ENCODE measurements at regions of chr4 and their contacts with region 1.

Region 1: DNA sequence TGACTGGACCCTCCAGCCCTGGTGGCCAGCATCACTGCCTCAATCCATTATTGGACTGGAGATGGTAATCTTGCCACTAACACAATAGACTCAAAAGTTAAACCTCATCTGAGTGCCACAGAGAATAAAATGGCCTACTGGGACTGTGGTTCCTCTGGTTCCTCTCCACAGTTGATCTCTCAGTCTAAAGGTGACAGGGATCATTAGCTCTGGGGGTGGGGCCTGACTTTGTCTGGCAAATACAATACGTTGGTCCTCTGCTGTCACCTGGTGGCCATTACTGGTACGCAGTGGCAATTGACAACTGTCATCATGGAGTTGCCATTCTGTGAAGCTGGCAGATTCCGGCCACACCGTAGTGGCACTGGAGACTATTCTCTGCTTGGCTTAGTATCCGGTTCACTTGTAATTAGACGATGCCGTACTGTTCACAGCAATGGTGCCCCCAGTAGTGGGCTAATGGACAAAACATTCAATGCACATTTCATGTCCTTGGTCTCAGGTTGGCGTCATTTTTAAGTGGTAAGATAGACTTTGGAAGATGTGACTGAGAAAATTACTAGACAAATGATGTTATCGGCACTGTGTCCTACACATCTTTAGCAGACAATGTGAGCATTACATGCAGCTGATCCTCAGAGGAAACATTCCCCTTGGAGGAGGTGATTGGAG is 6.7 kb downstream of the FGFBP2 start:
- DNase-seq: peak; percentile 73
- H3K4me3 ChIP-seq: no peak overlapping the region
- H3K27ac ChIP-seq: no peak overlapping the region
- H3K4me1 ChIP-seq: no peaks in the 10 kb centered on the region
- H3K27me3 ChIP-seq: no peaks in the 10 kb centered on the region
- CTCF ChIP-seq: peak; percentile 53 to 88 (median 79)
- EP300 ChIP-seq: no peak
- POLR2A ChIP-seq: no peak

Region 2: GRCh38 chr4:15479089-15479912 is 477.0 kb before region 1 on chr4:
- intact Hi-C with region 1: loop called (anchors 5 kb)
- DNase-seq: peak; percentile 78
- H3K4me3 ChIP-seq: peak overlapping the region; percentile 31 to 49 (median 40)
- H3K27ac ChIP-seq: peak overlapping the region; percentile 75 to 88 (median 82)
- H3K4me1 ChIP-seq: peaks cover 0 to 22% (median 19%) of the 10 kb centered on the region in 4 donors
- H3K27me3 ChIP-seq: no peaks in the 10 kb centered on the region
- CTCF ChIP-seq: peak; percentile 38 to 60 (median 45)
- EP300 ChIP-seq: no peak
- POLR2A ChIP-seq: no peak

Region 3: GRCh38 chr4:15799701-15800100 is 156.6 kb before region 1 on chr4:
- intact Hi-C with region 1: no loop called
- DNase-seq: no peak
- H3K4me3 ChIP-seq: no peak overlapping the region
- H3K27ac ChIP-seq: no peak overlapping the region
- H3K4me1 ChIP-seq: no peaks in the 10 kb centered on the region
- H3K27me3 ChIP-seq: no peaks in the 10 kb centered on the region
- CTCF ChIP-seq: no peak
- EP300 ChIP-seq: no peak
- POLR2A ChIP-seq: no peak

Region 4: GRCh38 chr4:16384576-16384975 is 428.3 kb after region 1 on chr4:
- intact Hi-C with region 1: no loop called
- DNase-seq: no peak
- H3K4me3 ChIP-seq: no peak overlapping the region
- H3K27ac ChIP-seq: no peak overlapping the region
- H3K4me1 ChIP-seq: no peaks in the 10 kb centered on the region
- H3K27me3 ChIP-seq: no peaks in the 10 kb centered on the region
- CTCF ChIP-seq: no peak
- EP300 ChIP-seq: no peak
- POLR2A ChIP-seq: no peak

Measured in sigmoid colon (tissue), 7 donors.